ENCODE measurements at regions of chr12 and their contacts with region 1.

Region 1: DNA sequence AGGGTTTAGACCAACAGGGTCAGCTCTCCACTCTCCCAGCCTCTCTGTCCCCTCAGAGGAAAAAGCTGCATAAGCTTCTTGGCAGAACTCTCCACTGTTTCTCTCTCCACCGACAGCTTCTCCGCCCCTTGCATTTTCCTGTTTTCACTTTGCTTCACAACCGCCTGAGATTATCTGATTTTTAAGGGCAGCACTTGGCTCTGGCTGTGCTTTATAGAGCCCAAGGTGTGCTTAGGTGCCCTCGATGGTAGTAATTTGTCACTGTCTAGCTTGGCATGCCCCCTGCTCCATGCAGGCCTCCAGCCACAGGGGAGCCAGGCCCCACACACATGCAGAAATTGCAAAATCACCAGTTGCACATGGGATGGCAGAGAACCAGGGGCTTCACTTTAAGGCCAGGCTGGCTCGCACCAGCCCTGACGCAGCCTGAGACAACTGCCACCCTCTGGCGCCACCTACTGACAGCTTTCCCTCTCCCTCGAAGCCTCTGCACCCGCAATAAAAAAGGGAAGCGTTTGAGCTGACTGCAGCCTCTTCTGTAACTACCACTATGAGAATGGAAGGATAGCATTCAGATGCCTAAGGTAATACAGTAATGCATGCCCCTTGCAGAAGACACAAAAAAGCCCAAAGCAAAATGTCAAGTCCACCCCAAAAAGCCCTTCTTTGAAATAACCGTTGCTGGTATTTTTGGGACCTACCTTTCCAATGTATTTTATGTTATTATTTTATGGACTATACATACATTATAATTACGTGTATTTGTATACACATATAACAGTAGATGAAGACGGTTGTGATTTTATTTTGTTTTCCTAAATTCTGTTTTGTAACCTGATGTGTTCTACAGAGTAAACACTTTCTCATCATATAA is 32.0 kb upstream of the RIMBP2 start:
- H3K4me3 ChIP-seq: no peak overlapping the region
- H3K27ac ChIP-seq: no peak overlapping the region
- H3K4me1 ChIP-seq: no peaks in the 10 kb centered on the region
- CTCF ChIP-seq: peak; percentile 78

Region 2: DNA sequence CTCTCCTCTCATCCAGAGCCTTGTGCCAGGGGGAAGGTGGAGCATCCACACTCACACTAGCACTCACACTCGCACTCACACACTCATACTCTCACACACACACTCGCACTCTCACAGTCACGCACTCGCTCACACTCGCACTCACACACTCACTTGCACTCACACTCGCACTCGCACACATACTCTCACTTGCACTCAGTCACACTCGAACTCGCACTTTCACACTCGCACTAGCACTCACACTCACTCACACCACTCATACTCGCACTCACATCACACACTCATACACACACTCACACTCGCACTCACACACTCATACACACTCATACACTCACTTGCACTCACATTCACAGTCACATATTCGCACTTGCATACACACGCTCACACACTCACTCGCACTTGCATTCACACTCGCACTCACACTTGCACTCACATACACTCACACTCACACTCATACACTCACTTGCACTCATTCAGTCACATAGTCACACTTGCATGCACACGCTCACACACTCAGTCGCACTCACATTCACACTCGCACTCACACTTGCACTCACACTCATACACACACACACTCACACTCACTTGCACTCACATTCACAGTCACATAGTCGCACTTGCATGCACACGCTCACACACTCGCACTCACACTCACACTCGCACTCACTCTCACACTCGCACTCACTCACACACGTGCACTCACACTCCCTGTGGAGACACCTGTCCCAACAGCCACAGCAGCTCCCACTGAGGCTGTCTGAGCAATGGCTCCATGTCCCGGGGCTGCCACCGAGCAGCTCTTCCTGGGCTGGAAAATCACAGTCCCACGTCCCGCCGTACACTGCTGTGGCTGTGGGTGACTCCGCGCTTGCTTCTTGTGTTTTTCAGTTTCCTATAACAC is 19.7 kb before region 1 on chr12:
- CTCF ChIA-PET with region 1: interaction called, 10 read pairs
- POLR2A ChIA-PET with region 1: no interaction called
- H3K4me3 ChIP-seq: no peak overlapping the region
- H3K27ac ChIP-seq: no peak overlapping the region
- H3K4me1 ChIP-seq: no peaks in the 10 kb centered on the region
- CTCF ChIP-seq: no peak

Measured in HEK293 (cell line).